Activated T-helper 1 cell treated with anti-CD3 and anti-CD28 coated beads, Interleukin-12 subunit alpha, Interleukin-12 subunit beta, Interleukin-2, Interleukin-4 antibody, amounts not matched to agents 30 ng/mL and 10 ng/mL and 1 ng/mL, durations not matched to agents 14 hours and 24 hours and 36 hours (primary cell): ENCODE measurements at regions of chr4 and their contacts with region 1.

Region 1: DNA sequence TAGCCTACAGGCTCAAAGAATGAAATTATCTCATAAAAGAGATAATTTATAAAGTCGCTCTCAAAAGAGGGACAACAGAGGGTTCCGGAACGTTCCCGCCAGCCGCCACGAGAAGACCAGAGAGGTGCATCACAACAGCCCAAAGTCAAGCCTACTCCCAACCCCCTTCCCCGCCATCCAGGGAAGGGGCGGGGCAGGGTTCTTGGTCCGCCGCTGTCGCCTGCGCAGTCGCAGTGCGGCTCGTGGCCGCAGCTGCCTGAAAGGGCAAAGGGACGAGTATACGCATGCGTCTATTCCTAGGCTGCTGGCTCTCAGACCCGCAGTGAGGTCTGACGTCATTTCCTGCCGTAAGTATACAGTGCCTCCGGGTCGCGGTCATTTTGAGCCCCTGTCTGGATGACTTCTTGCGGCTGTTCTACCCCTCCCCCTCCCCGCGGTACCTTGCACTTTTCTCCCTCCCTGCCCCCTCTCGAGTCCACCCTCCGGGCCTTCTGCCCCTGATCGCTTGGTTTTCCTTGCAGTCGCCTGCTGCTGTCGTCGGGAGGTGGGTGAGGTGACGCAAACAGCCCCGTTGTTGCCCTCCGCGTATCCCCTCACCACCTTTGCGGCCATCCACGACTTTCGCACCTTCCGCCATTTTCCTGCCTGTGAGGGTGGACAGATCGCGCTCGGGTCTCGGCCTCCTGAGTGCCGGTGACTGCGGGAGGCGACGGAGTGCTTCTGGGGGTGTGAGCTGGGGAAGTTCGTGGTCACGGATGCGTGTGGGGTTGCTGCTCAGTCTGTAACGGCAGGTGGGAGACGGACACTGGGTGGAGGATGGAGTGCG is at the start of gene OCIAD1:
- DNase-seq: peak; percentile 94
- H3K4me3 Mint-ChIP-seq: peak within 1 kb of the TSS; percentile 99
- H3K27ac Mint-ChIP-seq: peak within 1 kb of the TSS; percentile 100
- H3K4me1 Mint-ChIP-seq: peaks cover 26% of the 10 kb centered on the region
- H3K27me3 Mint-ChIP-seq: peaks cover 2% of the 10 kb centered on the region
- total RNA-seq, gene OCIAD1: 120 and 122 TPM in 2 replicates

Region 2: GRCh38 chr4:47463235-47463956 is 1367.5 kb before region 1 on chr4 and contains the start of gene COMMD8:
- intact Hi-C with region 1: loop called (anchors 5 kb)
- DNase-seq: peak; percentile 96
- H3K4me3 Mint-ChIP-seq: peak within 1 kb of the TSS; percentile 86
- H3K27ac Mint-ChIP-seq: peak within 1 kb of the TSS; percentile 53
- H3K4me1 Mint-ChIP-seq: peaks cover 32% of the 10 kb centered on the region
- H3K27me3 Mint-ChIP-seq: no peaks in the 10 kb centered on the region
- total RNA-seq, gene COMMD8: 15.8 and 15.9 TPM in 2 replicates

Region 3: DNA sequence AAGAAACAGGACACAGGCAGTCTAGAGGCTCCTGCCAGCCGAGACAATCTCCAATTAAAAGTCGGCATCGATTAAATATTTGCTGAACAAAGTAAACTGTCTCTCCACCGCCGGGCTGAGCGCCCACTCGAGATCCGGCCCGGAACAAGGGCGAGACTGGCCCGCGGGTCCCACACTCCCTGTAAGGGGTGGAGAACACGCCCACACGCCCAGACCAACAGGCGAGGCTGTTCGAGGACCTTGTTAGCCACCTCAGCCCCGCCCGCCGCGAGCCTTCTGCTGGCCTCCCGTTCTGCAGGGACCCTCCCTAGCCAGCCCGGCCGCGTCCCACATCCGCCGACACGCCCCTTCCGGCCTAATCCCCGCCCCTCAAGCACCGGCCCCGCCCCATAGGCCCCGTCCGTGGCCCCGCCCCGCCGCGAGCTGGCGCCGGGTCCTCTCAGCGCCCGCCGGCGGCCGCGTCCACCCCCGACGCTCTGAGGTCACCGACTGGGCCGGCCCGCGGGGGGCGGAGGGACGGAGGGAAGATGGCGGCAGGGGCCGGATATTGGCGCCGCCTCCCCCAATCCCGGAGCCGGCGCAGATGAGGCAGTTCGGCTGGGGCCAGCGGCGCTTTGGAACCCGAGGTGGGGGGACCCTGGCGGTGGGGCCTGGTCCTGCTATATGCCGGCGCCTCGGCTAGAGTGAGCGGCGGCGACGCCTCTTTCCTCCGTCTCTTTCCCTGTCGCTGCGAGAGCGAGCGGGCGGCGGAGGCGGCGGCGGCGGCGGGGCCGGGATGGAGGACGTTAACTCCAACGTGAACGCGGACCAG is 489.7 kb before region 1 on chr4 and contains the start of gene SLAIN2:
- intact Hi-C with region 1: loop called (anchors 1 kb)
- DNase-seq: peak; percentile 98
- H3K4me3 Mint-ChIP-seq: peak within 1 kb of the TSS; percentile 98
- H3K27ac Mint-ChIP-seq: peak within 1 kb of the TSS; percentile 98
- H3K4me1 Mint-ChIP-seq: peaks cover 74% of the 10 kb centered on the region
- H3K27me3 Mint-ChIP-seq: no peaks in the 10 kb centered on the region
- total RNA-seq, gene SLAIN2: 71.4 and 79.4 TPM in 2 replicates

Region 4: DNA sequence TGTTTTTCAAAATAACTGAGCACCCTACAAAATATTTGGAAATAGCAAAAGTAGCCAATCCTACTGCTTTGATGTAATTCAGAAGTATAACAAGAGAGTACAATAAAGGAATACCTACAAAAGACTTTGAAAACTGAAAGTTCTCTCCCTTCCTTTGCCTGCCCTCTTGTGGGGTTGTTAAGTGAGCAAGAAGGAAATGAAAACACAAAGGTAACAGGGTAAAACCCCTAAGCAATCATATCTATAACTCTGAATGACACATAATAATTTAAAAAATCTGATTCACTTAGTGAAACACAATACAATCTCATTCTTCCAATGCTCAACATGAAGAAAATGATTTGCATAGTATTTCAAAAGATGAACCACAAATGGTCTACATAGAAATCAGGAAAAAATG is 149.1 kb before region 1 on chr4:
- intact Hi-C with region 1: loop called (anchors 1 kb)
- DNase-seq: no peak
- H3K4me3 Mint-ChIP-seq: no peak overlapping the region
- H3K27ac Mint-ChIP-seq: peak overlapping the region; percentile 66
- H3K4me1 Mint-ChIP-seq: peaks cover 36% of the 10 kb centered on the region
- H3K27me3 Mint-ChIP-seq: no peaks in the 10 kb centered on the region

Region 5: GRCh38 chr4:48727666-48728459 is 103.1 kb before region 1 on chr4:
- intact Hi-C with region 1: loop called (anchors 5 kb)
- DNase-seq: no peak
- H3K4me3 Mint-ChIP-seq: no peak overlapping the region
- H3K27ac Mint-ChIP-seq: peak overlapping the region; percentile 47
- H3K4me1 Mint-ChIP-seq: peaks cover 88% of the 10 kb centered on the region
- H3K27me3 Mint-ChIP-seq: no peaks in the 10 kb centered on the region

Region 6: GRCh38 chr4:48766131-48766792 is 64.7 kb before region 1 on chr4:
- intact Hi-C with region 1: no loop called
- DNase-seq: no peak
- H3K4me3 Mint-ChIP-seq: no peak overlapping the region
- H3K27ac Mint-ChIP-seq: no peak overlapping the region
- H3K4me1 Mint-ChIP-seq: peaks cover 25% of the 10 kb centered on the region
- H3K27me3 Mint-ChIP-seq: no peaks in the 10 kb centered on the region

Region 7: GRCh38 chr4:48906206-48907173 is 75.6 kb after region 1 on chr4 and contains the start of gene OCIAD2:
- intact Hi-C with region 1: loop called (anchors 1 kb)
- DNase-seq: peak; percentile 71
- H3K4me3 Mint-ChIP-seq: peak within 1 kb of the TSS; percentile 100
- H3K27ac Mint-ChIP-seq: peak within 1 kb of the TSS; percentile 96
- H3K4me1 Mint-ChIP-seq: peaks cover 53% of the 10 kb centered on the region
- H3K27me3 Mint-ChIP-seq: no peaks in the 10 kb centered on the region
- total RNA-seq, gene OCIAD2: 59.6 and 62.5 TPM in 2 replicates